Activated CD8-positive, alpha-beta memory T cell treated with anti-CD3 and anti-CD28 coated beads, Interleukin-2, amount 10 ng/mL, durations not matched to agents 7 days and 5 days (primary cell): ENCODE measurements at regions of chr20 and their contacts with region 1.

Region 1: GRCh38 chr20:49982346-49983122 is at the start of gene SNAI1:
- DNase-seq: peak; percentile 85
- ATAC-seq: peak; percentile 91
- H3K4me3 Mint-ChIP-seq: peak within 1 kb of the TSS; percentile 41
- H3K27ac Mint-ChIP-seq: no peak within 1 kb of the TSS
- H3K4me1 Mint-ChIP-seq: peaks cover 18% of the 10 kb centered on the region
- H3K27me3 Mint-ChIP-seq: peaks cover 26% of the 10 kb centered on the region
- total RNA-seq, gene SNAI1: 0.21 to 0.61 TPM

Region 2: DNA sequence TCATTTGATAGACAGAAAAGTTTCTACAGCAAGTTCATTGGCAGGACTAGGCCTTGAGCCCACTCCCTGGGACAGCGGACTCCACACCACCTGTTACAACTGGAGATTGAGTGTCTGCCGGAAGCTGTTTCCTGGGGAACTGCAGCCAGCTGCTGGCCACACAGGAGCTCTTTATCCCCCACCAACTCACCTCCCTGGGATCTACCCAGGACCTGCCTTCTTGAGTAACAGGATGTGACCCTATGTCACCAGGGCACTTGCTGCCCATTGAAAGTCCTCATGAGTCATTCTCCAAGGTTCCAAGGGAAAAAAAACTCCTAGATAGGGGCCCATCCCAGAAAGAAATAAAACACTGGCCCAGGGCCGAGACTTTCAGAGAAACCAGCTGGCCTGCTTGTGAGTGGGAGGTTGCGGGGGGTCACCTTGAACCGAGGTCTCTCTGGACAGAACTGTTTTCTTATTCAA is 207.3 kb before region 1 on chr20:
- CTCF ChIA-PET with region 1: no interaction called
- DNase-seq: no peak
- ATAC-seq: no peak
- H3K4me3 Mint-ChIP-seq: no peak overlapping the region
- H3K27ac Mint-ChIP-seq: peak overlapping the region; percentile 17
- H3K4me1 Mint-ChIP-seq: peaks cover 24% of the 10 kb centered on the region
- H3K27me3 Mint-ChIP-seq: no peaks in the 10 kb centered on the region

Region 3: GRCh38 chr20:49865559-49865958 is 117.0 kb before region 1 on chr20:
- CTCF ChIA-PET with region 1: no interaction called
- DNase-seq: no peak
- ATAC-seq: no peak
- H3K4me3 Mint-ChIP-seq: no peak overlapping the region
- H3K27ac Mint-ChIP-seq: no peak overlapping the region
- H3K4me1 Mint-ChIP-seq: peaks cover 8% of the 10 kb centered on the region
- H3K27me3 Mint-ChIP-seq: no peaks in the 10 kb centered on the region

Region 4: DNA sequence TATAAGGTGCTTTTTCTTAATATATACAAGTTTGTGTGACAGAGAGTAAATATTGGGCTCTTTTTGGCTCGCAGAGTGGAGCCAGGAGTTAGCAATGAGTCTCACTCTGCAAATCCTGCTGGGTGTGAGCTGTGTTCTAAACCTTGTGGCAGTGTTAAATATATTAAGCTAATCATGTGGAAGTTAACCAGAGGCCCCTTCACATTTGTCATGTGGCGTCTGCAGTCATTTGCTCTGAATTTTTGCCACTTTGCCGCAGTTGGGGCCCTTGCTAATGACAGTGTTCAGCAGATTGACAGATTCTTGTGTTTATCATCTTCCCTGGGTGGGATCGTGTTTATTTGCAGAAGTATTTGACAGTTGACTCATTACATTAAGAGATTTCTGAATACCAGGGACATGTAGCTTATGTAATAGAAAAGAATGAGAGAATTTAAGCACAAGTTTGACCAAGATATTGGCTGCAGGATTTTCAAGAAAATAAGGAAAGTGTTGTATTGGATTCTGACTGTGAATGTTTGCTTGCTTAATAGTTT is 105.1 kb before region 1 on chr20:
- CTCF ChIA-PET with region 1: no interaction called
- DNase-seq: no peak
- ATAC-seq: no peak
- H3K4me3 Mint-ChIP-seq: no peak overlapping the region
- H3K27ac Mint-ChIP-seq: no peak overlapping the region
- H3K4me1 Mint-ChIP-seq: peaks cover 1% of the 10 kb centered on the region
- H3K27me3 Mint-ChIP-seq: no peaks in the 10 kb centered on the region

Region 5: DNA sequence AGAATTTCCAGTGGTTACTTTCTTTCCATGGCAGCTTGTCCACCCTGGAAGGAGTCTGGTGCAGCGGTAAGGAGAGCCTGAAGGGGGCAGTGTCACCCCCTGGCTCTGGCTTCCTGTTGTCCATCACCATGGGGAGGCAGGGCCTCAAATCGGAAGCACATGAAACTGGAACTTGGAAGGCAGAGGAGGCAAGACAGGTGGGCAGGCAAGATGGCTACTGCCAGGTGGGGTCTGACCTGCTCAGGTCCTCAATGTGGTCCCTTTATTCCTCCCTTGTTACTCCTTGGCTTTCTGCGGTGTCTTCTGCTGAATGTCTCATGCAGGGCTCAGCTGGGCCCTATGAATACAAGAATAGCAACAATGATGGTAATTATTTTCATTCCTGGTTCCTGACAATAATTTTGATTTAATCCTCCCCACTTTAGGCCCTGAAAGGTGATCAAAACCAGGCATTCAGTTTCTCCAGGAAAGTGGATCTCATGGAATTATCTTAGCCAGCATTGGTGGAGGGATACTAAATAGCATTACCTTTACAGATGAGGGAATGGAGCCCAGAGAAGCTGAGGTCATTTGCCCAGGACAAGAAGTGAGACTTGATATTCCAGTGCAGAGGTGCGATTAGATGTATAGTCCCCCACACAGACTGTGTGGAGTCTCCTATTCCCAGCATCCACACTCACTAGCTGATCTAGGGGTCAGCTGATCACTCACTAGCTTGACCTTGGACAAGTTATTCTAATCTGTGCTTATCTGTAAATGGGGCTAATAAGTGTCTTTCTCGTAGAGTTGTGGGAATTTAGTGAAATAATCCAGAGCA is 17.4 kb before region 1 on chr20:
- CTCF ChIA-PET with region 1: interaction called, 20 read pairs
- DNase-seq: no peak
- ATAC-seq: no peak
- H3K4me3 Mint-ChIP-seq: no peak overlapping the region
- H3K27ac Mint-ChIP-seq: no peak overlapping the region
- H3K4me1 Mint-ChIP-seq: no peaks in the 10 kb centered on the region
- H3K27me3 Mint-ChIP-seq: no peaks in the 10 kb centered on the region

Region 6: GRCh38 chr20:50012282-50013263 is 30.0 kb after region 1 on chr20:
- CTCF ChIA-PET with region 1: interaction called, 14 read pairs
- DNase-seq: no peak
- ATAC-seq: no peak
- H3K4me3 Mint-ChIP-seq: no peak overlapping the region
- H3K27ac Mint-ChIP-seq: no peak overlapping the region
- H3K4me1 Mint-ChIP-seq: peaks cover 6% of the 10 kb centered on the region
- H3K27me3 Mint-ChIP-seq: peaks cover 22% of the 10 kb centered on the region

Region 7: GRCh38 chr20:50061742-50062516 is 79.4 kb after region 1 on chr20:
- CTCF ChIA-PET with region 1: interaction called, 481 read pairs
- DNase-seq: no peak
- ATAC-seq: no peak
- H3K4me3 Mint-ChIP-seq: no peak overlapping the region
- H3K27ac Mint-ChIP-seq: no peak overlapping the region
- H3K4me1 Mint-ChIP-seq: no peaks in the 10 kb centered on the region
- H3K27me3 Mint-ChIP-seq: no peaks in the 10 kb centered on the region

Region 8: DNA sequence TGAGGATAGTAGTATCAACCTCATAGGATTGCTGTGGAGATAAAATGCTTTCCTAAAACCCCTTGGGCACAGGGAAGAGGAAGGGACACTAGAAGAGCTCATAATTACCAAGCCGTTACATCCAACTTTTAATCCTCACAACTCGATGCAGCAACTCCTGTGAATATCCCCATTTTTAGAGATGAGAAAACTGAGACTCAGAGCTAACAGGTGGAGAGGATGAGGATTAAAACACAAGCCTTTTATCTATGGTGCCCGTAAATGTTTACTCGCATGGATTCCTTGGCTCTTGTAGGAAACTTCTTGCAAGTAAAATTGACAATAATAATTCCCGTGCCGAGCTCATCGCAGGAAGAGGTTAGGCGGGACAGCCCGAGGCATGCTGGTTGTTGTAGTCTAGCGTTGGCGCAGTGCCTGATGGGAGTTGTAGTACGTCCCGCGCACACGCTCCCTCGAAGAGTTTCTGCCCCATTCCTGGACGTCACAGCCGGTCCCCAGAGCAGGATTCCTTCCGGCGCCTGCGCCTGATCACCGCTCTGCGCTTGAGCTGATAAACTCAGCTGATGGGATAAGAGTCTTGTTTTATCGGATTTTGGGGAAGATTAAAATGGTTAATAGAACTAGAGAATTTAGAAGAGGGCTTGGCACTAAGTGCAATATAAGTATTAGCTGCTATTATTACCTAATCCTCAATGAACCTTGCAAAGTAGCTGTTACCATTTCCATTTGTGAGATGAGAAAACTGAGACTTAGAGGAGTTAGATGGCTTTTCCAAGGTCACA is 133.2 kb after region 1 on chr20:
- CTCF ChIA-PET with region 1: interaction called, 22 read pairs
- DNase-seq: peak; percentile 95
- ATAC-seq: peak; percentile 77
- H3K4me3 Mint-ChIP-seq: peak overlapping the region; percentile 82
- H3K27ac Mint-ChIP-seq: peak overlapping the region; percentile 86
- H3K4me1 Mint-ChIP-seq: peaks cover 44% of the 10 kb centered on the region
- H3K27me3 Mint-ChIP-seq: no peaks in the 10 kb centered on the region

Region 9: DNA sequence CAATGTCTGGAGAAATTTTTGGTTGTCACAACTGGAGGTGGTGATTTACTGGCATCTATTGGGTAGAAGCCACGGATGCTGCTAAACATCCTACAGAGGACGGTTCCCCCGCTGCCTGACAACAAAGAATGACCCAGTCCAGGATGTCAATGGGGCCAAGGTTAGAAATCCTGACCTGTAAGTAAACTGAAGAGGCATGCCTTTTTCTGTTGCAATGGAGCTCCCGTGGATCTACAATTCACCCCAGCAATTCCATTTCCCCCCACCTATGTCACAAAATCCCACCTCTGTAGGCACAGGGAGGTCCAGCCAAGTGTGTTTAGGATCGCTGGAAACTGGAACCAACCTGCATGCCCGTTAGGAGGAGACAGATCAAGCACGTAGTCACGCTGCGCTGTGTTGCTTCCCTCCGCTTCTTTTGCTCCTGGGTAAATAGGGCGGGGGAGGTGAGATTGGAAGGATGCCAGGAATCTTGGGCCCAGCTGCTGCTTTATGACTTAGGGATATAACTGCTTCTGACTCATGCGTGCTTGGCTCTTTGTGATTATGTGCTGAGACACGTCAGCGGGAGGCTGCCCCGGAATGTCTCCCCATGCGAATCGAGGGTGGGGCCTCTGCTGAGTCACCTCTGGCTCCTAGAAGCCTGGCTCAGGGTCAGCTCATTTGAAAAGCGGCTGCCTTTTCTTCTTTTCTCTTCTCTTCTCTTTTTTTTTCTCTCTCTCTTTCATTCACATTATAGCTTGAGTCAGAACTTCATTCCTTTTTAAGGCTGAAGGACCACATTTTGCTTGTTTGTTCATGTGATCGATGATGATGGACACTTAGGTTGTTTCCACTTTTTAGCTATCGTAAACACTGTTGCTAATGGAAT is 183.4 kb after region 1 on chr20:
- CTCF ChIA-PET with region 1: interaction called, 100 read pairs
- DNase-seq: peak; percentile 92
- ATAC-seq: peak; percentile 99
- H3K4me3 Mint-ChIP-seq: peak overlapping the region; percentile 76
- H3K27ac Mint-ChIP-seq: peak overlapping the region; percentile 83
- H3K4me1 Mint-ChIP-seq: peaks cover 15% of the 10 kb centered on the region
- H3K27me3 Mint-ChIP-seq: peaks cover 3% of the 10 kb centered on the region